Naive thymus-derived CD8-positive, alpha-beta T cell (primary cell): ENCODE measurements at regions of chr3 and their contacts with region 1.

Region 1: GRCh38 chr3:128787256-128788240 is 61.6 kb downstream of the RAB7A start:
- DNase-seq: peak in 3 of 10 donors; percentile 26 to 37 (median 29)
- ATAC-seq: peak; percentile 32 to 35
- H3K4me3 Mint-ChIP-seq: peak overlapping the region; percentile 71 to 91 (median 79)
- H3K27ac Mint-ChIP-seq: peak overlapping the region; percentile 78 to 99 (median 96)
- H3K4me1 Mint-ChIP-seq: peaks cover 40 to 96% (median 86%) of the 10 kb centered on the region in 4 donors
- H3K27me3 Mint-ChIP-seq: no peaks in the 10 kb centered on the region

Region 2: DNA sequence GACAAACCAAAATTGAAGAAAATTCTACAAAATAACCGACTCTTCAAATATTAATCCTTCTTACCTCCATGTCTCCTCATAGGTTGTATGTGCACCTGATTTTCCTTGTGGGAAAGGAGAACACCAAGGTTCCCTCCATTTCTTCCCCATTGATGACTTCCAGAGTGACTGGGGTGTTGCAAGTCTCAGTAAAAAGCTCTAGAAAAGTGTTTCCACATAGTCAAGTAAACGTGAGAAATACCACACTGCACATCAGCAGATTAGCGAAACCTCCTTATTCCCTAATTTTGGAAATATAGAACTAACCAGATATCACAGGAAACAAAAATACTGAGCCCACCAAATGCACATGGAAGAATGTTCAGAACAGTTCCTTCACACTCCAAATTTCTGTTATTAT is 132.0 kb before region 1 on chr3:
- POLR2A ChIA-PET with region 1: interaction called, 17 read pairs
- DNase-seq: no peak
- ATAC-seq: no peak
- H3K4me3 Mint-ChIP-seq: peak overlapping the region in 9 of 10 donors; percentile 50 to 87 (median 58)
- H3K27ac Mint-ChIP-seq: peak overlapping the region in 2 of 10 donors; percentile 48 to 67
- H3K4me1 Mint-ChIP-seq: peaks cover 8 to 20% (median 12%) of the 10 kb centered on the region in 4 donors
- H3K27me3 Mint-ChIP-seq: peaks cover 0 to 1% (median 0%) of the 10 kb centered on the region in 5 donors

Region 3: GRCh38 chr3:128725932-128726690 is 61.4 kb before region 1 on chr3 and contains the start of gene RAB7A:
- POLR2A ChIA-PET with region 1: interaction called, 32 read pairs
- DNase-seq: peak; percentile 91 to 99 (median 96)
- ATAC-seq: peak; percentile 97 to 98
- H3K4me3 Mint-ChIP-seq: peak within 1 kb of the TSS; percentile 92 to 98 (median 96)
- H3K27ac Mint-ChIP-seq: peak within 1 kb of the TSS; percentile 92 to 98 (median 98)
- H3K4me1 Mint-ChIP-seq: peaks cover 20 to 59% (median 58%) of the 10 kb centered on the region in 4 donors
- H3K27me3 Mint-ChIP-seq: peaks cover 0 to 3% (median 0%) of the 10 kb centered on the region in 5 donors
- polyA plus RNA-seq, gene RAB7A: 177 to 200 (median 185) TPM

Region 4: GRCh38 chr3:128804017-128804810 is 16.7 kb after region 1 on chr3:
- POLR2A ChIA-PET with region 1: interaction called, 31 read pairs
- DNase-seq: peak; percentile 33 to 86 (median 68)
- ATAC-seq: peak; percentile 94 to 97
- H3K4me3 Mint-ChIP-seq: peak overlapping the region; percentile 73 to 90 (median 84)
- H3K27ac Mint-ChIP-seq: peak overlapping the region; percentile 90 to 98 (median 96)
- H3K4me1 Mint-ChIP-seq: peaks cover 36 to 77% (median 71%) of the 10 kb centered on the region in 4 donors
- H3K27me3 Mint-ChIP-seq: no peaks in the 10 kb centered on the region

Region 5: DNA sequence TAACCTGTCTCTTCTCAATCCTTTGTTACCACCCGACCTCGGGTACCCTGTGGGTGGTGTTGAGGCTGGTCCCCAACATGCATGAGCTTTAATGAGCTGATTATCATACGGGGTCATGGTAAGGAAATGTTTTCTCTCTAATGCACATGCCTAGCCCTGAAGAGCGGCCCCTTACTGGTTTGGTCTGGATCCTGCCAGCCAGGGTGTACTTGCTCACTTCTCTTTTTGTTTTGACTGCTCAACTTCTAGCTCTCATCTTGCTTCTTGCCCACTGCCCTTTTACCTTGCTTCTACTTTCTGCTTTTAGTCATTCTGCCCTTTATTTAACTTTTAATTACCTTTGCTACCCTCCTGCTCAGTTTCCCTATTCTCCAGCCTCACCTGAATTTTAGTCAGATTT is 47.5 kb after region 1 on chr3:
- POLR2A ChIA-PET with region 1: no interaction called
- DNase-seq: no peak
- ATAC-seq: no peak
- H3K4me3 Mint-ChIP-seq: no peak overlapping the region
- H3K27ac Mint-ChIP-seq: no peak overlapping the region
- H3K4me1 Mint-ChIP-seq: no peaks in the 10 kb centered on the region
- H3K27me3 Mint-ChIP-seq: no peaks in the 10 kb centered on the region